ENCODE measurements at regions of chr3 and their contacts with region 1.

Region 1: GRCh38 chr3:136196401-136197158 is 445 bp upstream of the MSL2 start:
- DNase-seq: peak; percentile 97 to 98 (median 97)
- H3K4me3 ChIP-seq: peak overlapping the region; percentile 66 to 71
- H3K4me3 Mint-ChIP-seq: peak overlapping the region; percentile 94 to 100 (median 99)
- H3K27ac ChIP-seq: peak overlapping the region; percentile 97
- H3K27ac Mint-ChIP-seq: peak overlapping the region; percentile 98 to 100 (median 100)
- H3K4me1 ChIP-seq: peaks cover 26% of the 10 kb centered on the region
- H3K4me1 Mint-ChIP-seq: peaks cover 24 to 52% (median 34%) of the 10 kb centered on the region in 4 donors
- H3K27me3 ChIP-seq: no peaks in the 10 kb centered on the region
- H3K27me3 Mint-ChIP-seq: peaks cover 3 to 9% of the 10 kb centered on the region in 2 donors

Region 2: DNA sequence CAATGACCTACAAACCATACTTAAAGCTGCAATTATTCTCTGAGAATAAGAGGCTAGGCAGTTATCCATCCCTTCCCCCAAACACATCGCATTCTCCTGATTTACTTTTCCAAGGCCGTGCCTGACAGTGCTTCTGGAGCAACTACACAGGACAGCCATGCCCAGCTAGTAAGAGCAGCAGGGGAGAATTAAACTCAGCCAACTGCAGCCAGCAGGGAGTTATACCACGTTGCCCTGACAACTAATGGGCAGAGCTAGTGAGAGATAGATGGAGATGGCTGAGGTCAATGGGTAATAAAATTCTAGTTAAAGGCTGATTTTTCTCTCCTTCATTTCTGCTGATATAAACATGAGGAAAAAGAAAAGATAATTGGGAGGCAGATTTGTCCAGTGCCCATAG is 424.8 kb before region 1 on chr3:
- CTCF ChIA-PET with region 1: no interaction called
- POLR2A ChIA-PET with region 1: no interaction called
- intact Hi-C with region 1: no loop called
- DNase-seq: no peak
- H3K4me3 ChIP-seq: no peak overlapping the region
- H3K4me3 Mint-ChIP-seq: no peak overlapping the region
- H3K27ac ChIP-seq: no peak overlapping the region
- H3K27ac Mint-ChIP-seq: no peak overlapping the region
- H3K4me1 ChIP-seq: no peaks in the 10 kb centered on the region
- H3K4me1 Mint-ChIP-seq: no peaks in the 10 kb centered on the region
- H3K27me3 ChIP-seq: no peaks in the 10 kb centered on the region
- H3K27me3 Mint-ChIP-seq: peaks cover 2 to 4% of the 10 kb centered on the region in 2 donors

Region 3: GRCh38 chr3:136075218-136075808 is 121.3 kb before region 1 on chr3:
- CTCF ChIA-PET with region 1: interaction called, 3 read pairs
- POLR2A ChIA-PET with region 1: interaction called, 3 read pairs
- intact Hi-C with region 1: loop called (anchors 2 kb)
- DNase-seq: peak; percentile 56 to 70 (median 64)
- H3K4me3 ChIP-seq: no peak overlapping the region
- H3K4me3 Mint-ChIP-seq: no peak overlapping the region
- H3K27ac ChIP-seq: no peak overlapping the region
- H3K27ac Mint-ChIP-seq: no peak overlapping the region
- H3K4me1 ChIP-seq: no peaks in the 10 kb centered on the region
- H3K4me1 Mint-ChIP-seq: peaks cover 0 to 4% (median 1%) of the 10 kb centered on the region in 4 donors
- H3K27me3 ChIP-seq: no peaks in the 10 kb centered on the region
- H3K27me3 Mint-ChIP-seq: no peaks in the 10 kb centered on the region

Region 4: DNA sequence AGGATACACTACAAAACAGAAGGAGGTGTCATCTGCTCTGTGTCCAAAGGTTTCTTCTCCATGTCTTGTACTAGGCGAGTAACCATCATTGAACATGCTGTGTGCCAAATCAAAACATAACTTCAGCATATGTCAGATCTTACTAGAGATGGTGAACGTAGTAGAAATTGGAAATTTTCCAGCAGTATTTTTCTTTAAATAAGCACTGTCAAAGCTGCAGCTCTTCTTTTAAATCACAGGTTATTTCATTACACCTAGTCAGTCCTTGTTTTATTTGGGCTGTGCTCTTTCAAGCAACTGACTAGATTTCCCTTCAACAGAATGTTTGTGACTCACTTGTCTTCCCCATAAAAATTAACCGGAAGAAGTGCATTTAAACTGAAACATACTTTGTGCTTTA is 46.9 kb before region 1 on chr3:
- CTCF ChIA-PET with region 1: interaction called, 10 read pairs
- POLR2A ChIA-PET with region 1: interaction called, 30 read pairs
- intact Hi-C with region 1: loop called (anchors 2 kb)
- DNase-seq: no peak
- H3K4me3 ChIP-seq: no peak overlapping the region
- H3K4me3 Mint-ChIP-seq: no peak overlapping the region
- H3K27ac ChIP-seq: no peak overlapping the region
- H3K27ac Mint-ChIP-seq: peak overlapping the region; percentile 3 to 63 (median 35)
- H3K4me1 ChIP-seq: peaks cover 30% of the 10 kb centered on the region
- H3K4me1 Mint-ChIP-seq: peaks cover 33 to 67% (median 49%) of the 10 kb centered on the region in 4 donors
- H3K27me3 ChIP-seq: no peaks in the 10 kb centered on the region
- H3K27me3 Mint-ChIP-seq: no peaks in the 10 kb centered on the region

Region 5: GRCh38 chr3:136177876-136178275 is 18.7 kb before region 1 on chr3:
- CTCF ChIA-PET with region 1: interaction called, 5 read pairs
- POLR2A ChIA-PET with region 1: interaction called, 60 read pairs
- intact Hi-C with region 1: loop called (anchors 1 kb)
- DNase-seq: no peak
- H3K4me3 ChIP-seq: no peak overlapping the region
- H3K4me3 Mint-ChIP-seq: peak overlapping the region in 2 of 8 donors; percentile 61 to 67
- H3K27ac ChIP-seq: no peak overlapping the region
- H3K27ac Mint-ChIP-seq: peak overlapping the region in 1 of 7 donors; percentile 76
- H3K4me1 ChIP-seq: peaks cover 94% of the 10 kb centered on the region
- H3K4me1 Mint-ChIP-seq: peaks cover 39 to 67% (median 53%) of the 10 kb centered on the region in 4 donors
- H3K27me3 ChIP-seq: no peaks in the 10 kb centered on the region
- H3K27me3 Mint-ChIP-seq: no peaks in the 10 kb centered on the region

Region 6: DNA sequence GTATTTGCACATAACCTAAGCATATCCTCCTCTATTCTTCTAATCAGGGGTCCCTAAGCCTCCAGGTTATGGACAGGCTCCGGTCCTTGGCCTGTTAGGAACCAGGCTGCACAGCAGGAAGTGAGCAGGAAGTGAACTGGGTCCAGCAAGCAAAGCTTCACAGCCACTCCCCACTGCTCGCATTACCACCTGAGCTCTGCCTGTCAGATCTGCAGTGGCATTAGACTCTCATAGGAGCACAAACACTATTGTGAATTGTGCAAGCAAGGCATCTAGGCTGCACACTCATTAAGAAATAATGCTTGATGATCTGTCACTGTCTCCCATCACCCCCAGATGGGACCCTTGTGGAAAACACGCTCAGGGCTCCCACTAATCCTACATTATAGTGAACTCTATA is 10.2 kb before region 1 on chr3:
- CTCF ChIA-PET with region 1: interaction called, 5 read pairs
- POLR2A ChIA-PET with region 1: interaction called, 60 read pairs
- intact Hi-C with region 1: loop called (anchors 1 kb)
- DNase-seq: no peak
- H3K4me3 ChIP-seq: no peak overlapping the region
- H3K4me3 Mint-ChIP-seq: peak overlapping the region; percentile 49 to 85 (median 73)
- H3K27ac ChIP-seq: no peak overlapping the region
- H3K27ac Mint-ChIP-seq: peak overlapping the region in 5 of 7 donors; percentile 18 to 71 (median 56)
- H3K4me1 ChIP-seq: peaks cover 98% of the 10 kb centered on the region
- H3K4me1 Mint-ChIP-seq: peaks cover 57 to 97% (median 77%) of the 10 kb centered on the region in 4 donors
- H3K27me3 ChIP-seq: no peaks in the 10 kb centered on the region
- H3K27me3 Mint-ChIP-seq: no peaks in the 10 kb centered on the region

Region 7: GRCh38 chr3:136250226-136250902 is 53.8 kb after region 1 on chr3 and contains the start of gene PCCB:
- CTCF ChIA-PET with region 1: interaction called, 45 read pairs
- POLR2A ChIA-PET with region 1: interaction called, 76 read pairs
- intact Hi-C with region 1: loop called (anchors 1 kb)
- DNase-seq: peak; percentile 93 to 96 (median 94)
- H3K4me3 ChIP-seq: peak within 1 kb of the TSS; percentile 43 to 77
- H3K4me3 Mint-ChIP-seq: peak within 1 kb of the TSS; percentile 85 to 93 (median 90)
- H3K27ac ChIP-seq: peak within 1 kb of the TSS; percentile 75
- H3K27ac Mint-ChIP-seq: peak within 1 kb of the TSS; percentile 75 to 94 (median 90)
- H3K4me1 ChIP-seq: peaks cover 17% of the 10 kb centered on the region
- H3K4me1 Mint-ChIP-seq: peaks cover 15 to 27% (median 20%) of the 10 kb centered on the region in 4 donors
- H3K27me3 ChIP-seq: no peaks in the 10 kb centered on the region
- H3K27me3 Mint-ChIP-seq: no peaks in the 10 kb centered on the region
- total RNA-seq, gene PCCB: 12.1 to 12.4 TPM